GM12878 (cell line): ENCODE measurements at regions of chr22 and their contacts with region 1.

Region 1: DNA sequence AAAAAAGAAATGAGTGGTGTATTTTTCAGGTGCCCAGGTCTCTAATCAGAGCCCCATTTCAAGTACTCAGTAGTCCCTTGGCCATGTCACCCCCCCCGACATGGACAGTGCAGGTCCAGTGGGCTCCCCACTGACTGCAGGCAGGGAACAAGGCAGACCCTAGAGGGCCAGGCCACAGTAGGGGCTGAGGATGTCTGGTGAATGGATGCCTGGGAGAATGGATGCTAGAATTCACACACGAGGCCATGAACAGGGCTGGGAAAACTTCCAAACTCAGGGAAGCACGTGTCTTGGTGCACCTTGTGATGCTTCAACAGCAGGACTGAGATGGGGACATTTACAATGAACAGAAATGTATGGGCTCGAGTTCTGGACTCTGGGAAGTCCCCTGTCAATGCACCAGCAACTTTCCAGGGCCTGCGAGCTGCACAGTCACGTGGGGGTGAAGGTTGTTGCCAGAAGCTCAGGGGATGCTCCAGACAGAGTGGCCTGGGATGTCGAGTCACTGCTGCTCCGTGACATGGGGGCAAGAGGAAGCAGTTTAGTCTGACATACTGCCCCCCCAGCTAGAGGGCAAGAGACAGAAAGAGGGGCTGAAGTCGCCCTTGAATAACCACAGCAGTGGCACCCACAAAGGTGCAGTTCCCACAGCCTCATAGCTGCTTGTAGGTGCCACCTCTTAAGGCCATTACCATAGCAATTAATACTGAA is 3.1 kb downstream of the APOBEC3G start:
- DNase-seq: no peak
- ATAC-seq: peak; percentile 51
- H3K4me3 ChIP-seq: peak overlapping the region; percentile 43; the same call in 1 of the 2 replicates
- H3K27ac ChIP-seq: peak overlapping the region; percentile 41
- H3K4me1 ChIP-seq: peaks cover 30% of the 10 kb centered on the region
- H3K27me3 ChIP-seq: no peaks in the 10 kb centered on the region
- CTCF ChIP-seq: no peak
- EP300 ChIP-seq: no peak
- POLR2A ChIP-seq: no peak; the same call in none of the 2 replicates
- RAD21 ChIP-seq: no peak

Region 2: DNA sequence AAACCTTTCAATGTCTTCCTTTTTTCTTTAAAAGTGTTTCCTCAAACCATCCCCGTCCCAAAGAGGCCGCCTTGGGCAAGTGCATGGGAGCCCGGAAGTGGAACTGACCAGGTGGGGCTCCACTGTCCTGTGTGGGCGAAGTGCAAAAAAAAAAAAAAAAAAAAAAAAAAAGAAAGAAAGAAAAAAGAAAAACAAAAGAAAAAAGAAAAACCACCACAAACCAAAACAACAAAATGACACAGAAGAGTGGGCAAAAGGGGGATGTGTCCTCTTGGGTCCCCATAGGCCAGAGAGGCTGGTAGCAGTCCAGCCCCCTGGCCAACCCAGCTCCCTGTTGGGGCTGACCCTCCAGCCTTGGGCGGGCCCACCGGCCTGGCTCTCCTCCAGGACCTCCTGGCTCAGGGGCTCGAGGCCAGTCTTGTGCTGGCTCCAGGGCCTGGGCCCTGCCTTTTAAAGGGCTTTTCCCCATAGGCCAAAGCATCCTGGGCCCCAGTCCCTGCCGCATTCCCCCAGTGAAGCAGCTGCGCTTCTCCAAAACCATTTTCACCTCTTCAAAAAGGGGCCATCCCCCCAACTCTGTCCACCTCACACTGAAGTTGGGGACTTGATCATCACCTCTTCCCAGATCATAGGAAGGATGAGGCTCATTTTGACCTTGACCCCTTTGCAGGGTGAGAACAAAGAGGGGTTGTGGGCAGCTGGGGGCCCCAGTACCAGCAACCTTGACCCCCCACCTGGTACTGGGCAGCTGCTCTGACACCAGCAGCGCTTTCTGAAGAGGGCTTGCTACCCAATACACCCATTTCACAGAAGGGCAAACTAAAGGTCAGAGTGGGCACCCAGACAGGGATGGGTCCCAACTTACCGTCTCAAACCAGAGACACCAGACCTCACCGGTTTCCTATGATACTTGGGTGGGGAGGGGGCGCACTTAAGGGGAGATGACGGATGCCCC is 217.6 kb before region 1 on chr22:
- CTCF ChIA-PET with region 1: no interaction called
- POLR2A ChIA-PET with region 1: interaction called, 10 read pairs
- RAD21 ChIA-PET with region 1: no interaction called
- SMC1A ChIA-PET with region 1: no interaction called
- in situ Hi-C with region 1: no loop called
- intact Hi-C with region 1: no loop called
- DNase-seq: no peak
- ATAC-seq: peak; percentile 32
- H3K4me3 ChIP-seq: no peak overlapping the region
- H3K27ac ChIP-seq: no peak overlapping the region
- H3K4me1 ChIP-seq: no peaks in the 10 kb centered on the region
- H3K27me3 ChIP-seq: no peaks in the 10 kb centered on the region
- CTCF ChIP-seq: no peak
- EP300 ChIP-seq: no peak
- POLR2A ChIP-seq: peak; percentile 26
- RAD21 ChIP-seq: no peak

Region 3: GRCh38 chr22:39117585-39118191 is 37.5 kb after region 1 on chr22:
- CTCF ChIA-PET with region 1: interaction called, 4 read pairs
- POLR2A ChIA-PET with region 1: interaction called, 5 read pairs
- RAD21 ChIA-PET with region 1: interaction called, 7 read pairs
- SMC1A ChIA-PET with region 1: interaction called, 10 read pairs
- in situ Hi-C with region 1: no loop called
- intact Hi-C with region 1: no loop called
- DNase-seq: peak; percentile 81
- ATAC-seq: peak; percentile 75
- H3K4me3 ChIP-seq: no peak overlapping the region
- H3K27ac ChIP-seq: peak overlapping the region; percentile 96
- H3K4me1 ChIP-seq: peaks cover 49% of the 10 kb centered on the region
- H3K27me3 ChIP-seq: no peaks in the 10 kb centered on the region
- CTCF ChIP-seq: peak; percentile 56 to 75 (median 64)
- EP300 ChIP-seq: peak; percentile 82 to 95
- POLR2A ChIP-seq: no peak
- RAD21 ChIP-seq: peak; percentile 86

Region 4: GRCh38 chr22:39135090-39135896 is 55.1 kb after region 1 on chr22:
- CTCF ChIA-PET with region 1: no interaction called
- POLR2A ChIA-PET with region 1: no interaction called
- RAD21 ChIA-PET with region 1: no interaction called
- SMC1A ChIA-PET with region 1: no interaction called
- in situ Hi-C with region 1: no loop called
- intact Hi-C with region 1: no loop called
- DNase-seq: no peak
- ATAC-seq: peak; percentile 96
- H3K4me3 ChIP-seq: no peak overlapping the region
- H3K27ac ChIP-seq: no peak overlapping the region
- H3K4me1 ChIP-seq: no peaks in the 10 kb centered on the region
- H3K27me3 ChIP-seq: no peaks in the 10 kb centered on the region
- CTCF ChIP-seq: peak; percentile 63 to 79 (median 68)
- EP300 ChIP-seq: no peak
- POLR2A ChIP-seq: no peak
- RAD21 ChIP-seq: peak; percentile 59

Region 5: DNA sequence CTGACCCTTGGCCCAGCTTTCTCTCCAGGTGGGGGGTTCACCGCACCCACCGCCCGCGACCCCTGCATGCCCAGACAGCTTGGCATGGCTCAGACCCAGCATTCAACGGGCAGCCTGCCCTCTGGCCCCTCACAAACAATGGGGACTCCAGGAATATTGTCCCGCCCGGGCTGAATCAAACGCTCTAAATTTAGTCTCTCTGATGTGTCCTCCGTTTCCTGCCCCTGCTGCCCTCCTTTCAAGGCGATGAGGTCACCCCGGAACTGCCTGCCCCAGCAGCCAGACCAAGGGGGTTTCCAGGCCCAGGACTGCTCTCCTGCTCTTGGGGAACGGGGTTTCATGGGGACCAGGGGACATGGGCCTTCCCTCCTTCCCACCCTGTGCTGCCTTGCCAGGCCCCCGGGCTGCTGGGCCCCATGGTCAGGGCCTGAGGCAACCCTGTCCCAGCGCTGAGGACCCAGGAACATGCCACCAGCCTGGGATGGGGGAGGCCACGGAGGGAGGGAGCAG is 174.6 kb after region 1 on chr22:
- CTCF ChIA-PET with region 1: no interaction called
- POLR2A ChIA-PET with region 1: no interaction called
- RAD21 ChIA-PET with region 1: no interaction called
- SMC1A ChIA-PET with region 1: no interaction called
- in situ Hi-C with region 1: no loop called
- intact Hi-C with region 1: no loop called
- DNase-seq: peak; percentile 41
- ATAC-seq: peak; percentile 92
- H3K4me3 ChIP-seq: no peak overlapping the region
- H3K27ac ChIP-seq: peak overlapping the region; percentile 90
- H3K4me1 ChIP-seq: peaks cover 36% of the 10 kb centered on the region
- H3K27me3 ChIP-seq: no peaks in the 10 kb centered on the region
- CTCF ChIP-seq: no peak
- EP300 ChIP-seq: 0 out of 4 replicates have a peak, but pooled peaks of 1 of the 2 experiments have one; percentile 21
- POLR2A ChIP-seq: peak; percentile 75
- RAD21 ChIP-seq: no peak